A549 (cell line): ENCODE measurements at regions of chr13 and their contacts with region 1.

Region 1: DNA sequence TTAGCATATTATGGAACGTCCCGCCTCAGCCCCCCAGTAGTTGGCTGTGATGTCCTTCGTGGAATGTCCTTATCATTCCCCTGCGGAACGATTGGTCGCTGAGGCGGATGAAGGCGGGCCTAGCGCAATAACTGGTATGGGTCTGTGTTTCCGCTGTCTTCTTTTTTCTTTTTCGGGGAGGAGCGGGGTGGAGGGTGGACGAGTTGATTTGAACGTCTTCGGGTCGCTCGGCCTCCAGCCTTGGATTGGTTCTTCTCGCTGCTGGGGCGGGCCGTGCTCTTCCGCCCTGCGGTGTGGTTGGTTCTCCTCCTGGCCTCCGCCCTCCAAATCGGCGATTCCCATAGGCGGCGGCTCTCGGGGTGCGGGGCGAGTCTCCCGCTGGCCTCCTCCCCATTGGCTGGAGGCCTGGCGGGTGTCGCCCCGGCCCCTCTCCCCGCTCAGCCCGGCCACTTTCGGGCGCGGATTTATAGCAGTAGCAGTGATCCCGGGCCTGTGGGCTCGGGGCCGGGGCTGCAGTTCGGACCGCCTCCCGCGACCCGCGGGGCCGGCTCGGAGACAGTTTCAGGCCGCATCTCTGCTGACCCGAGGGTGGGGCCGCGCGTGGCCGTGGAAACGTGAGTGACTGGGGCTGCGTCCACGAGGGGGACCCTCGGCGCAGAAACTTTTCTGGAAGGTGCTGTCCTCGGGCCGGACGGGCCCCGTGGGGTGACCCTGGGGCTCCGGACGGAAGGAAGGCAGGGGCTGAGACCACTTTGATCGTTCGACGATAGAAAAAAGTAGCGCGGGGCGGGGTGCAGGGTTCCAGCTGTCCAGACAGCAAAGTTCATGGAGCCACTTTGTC is 2.1 kb downstream of the ING1 start:
- DNase-seq: peak; percentile 82 to 98
- ATAC-seq: peak; percentile 70 to 86
- H3K4me3 ChIP-seq: peak overlapping the region; percentile 93
- H3K27ac ChIP-seq: peak overlapping the region; percentile 73 to 87
- H3K4me1 ChIP-seq: peaks cover 18% of the 10 kb centered on the region; the same call in 2 of the 3 replicates
- CTCF ChIP-seq: no peak
- EP300 ChIP-seq: no peak
- POLR2A ChIP-seq: peak; percentile 74
- RAD21 ChIP-seq: no peak

Region 2: GRCh38 chr13:110726726-110727125 is 11.1 kb after region 1 on chr13:
- CTCF ChIA-PET with region 1: no interaction called
- POLR2A ChIA-PET with region 1: interaction called, 11 read pairs
- DNase-seq: no peak
- ATAC-seq: no peak
- H3K4me3 ChIP-seq: no peak overlapping the region
- H3K27ac ChIP-seq: no peak overlapping the region
- H3K4me1 ChIP-seq: no peaks in the 10 kb centered on the region
- CTCF ChIP-seq: no peak
- EP300 ChIP-seq: no peak
- POLR2A ChIP-seq: no peak
- RAD21 ChIP-seq: no peak

Region 3: DNA sequence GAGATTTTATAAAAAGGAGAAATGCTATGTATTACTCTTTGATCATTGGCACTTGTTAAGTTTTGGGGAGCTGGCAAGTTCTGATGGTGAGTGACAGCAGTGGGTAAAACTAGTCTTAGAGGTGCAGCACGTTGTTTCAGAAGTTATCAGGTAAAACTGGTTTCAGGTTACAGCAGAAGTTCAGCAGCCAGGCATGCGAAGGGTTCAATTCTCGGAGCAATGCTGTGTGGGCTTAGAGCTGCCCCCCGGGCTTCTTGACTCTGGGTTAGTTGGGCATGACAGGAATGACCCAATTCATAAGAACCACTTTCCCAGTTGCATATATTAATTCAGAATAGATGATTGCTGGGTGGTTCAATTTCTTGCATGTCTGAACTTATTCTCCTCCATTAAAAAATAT is 32.7 kb after region 1 on chr13:
- CTCF ChIA-PET with region 1: no interaction called
- POLR2A ChIA-PET with region 1: no interaction called
- DNase-seq: no peak
- ATAC-seq: no peak
- H3K4me3 ChIP-seq: no peak overlapping the region
- H3K27ac ChIP-seq: no peak overlapping the region
- H3K4me1 ChIP-seq: no peaks in the 10 kb centered on the region
- CTCF ChIP-seq: no peak
- EP300 ChIP-seq: no peak
- POLR2A ChIP-seq: no peak
- RAD21 ChIP-seq: no peak

Region 4: GRCh38 chr13:110869805-110870706 is 154.4 kb after region 1 on chr13:
- CTCF ChIA-PET with region 1: no interaction called
- POLR2A ChIA-PET with region 1: interaction called, 14 read pairs
- DNase-seq: peak; percentile 90 to 96
- ATAC-seq: peak; percentile 91
- H3K4me3 ChIP-seq: peak overlapping the region; percentile 32; the same call in 2 of the 3 replicates
- H3K27ac ChIP-seq: peak overlapping the region; percentile 52 to 81
- H3K4me1 ChIP-seq: peaks cover 19% of the 10 kb centered on the region
- CTCF ChIP-seq: no peak
- EP300 ChIP-seq: peak in 1 of 2 experiments; percentile 17; a peak in 1 of 5 replicates
- POLR2A ChIP-seq: no peak
- RAD21 ChIP-seq: no peak

Region 5: DNA sequence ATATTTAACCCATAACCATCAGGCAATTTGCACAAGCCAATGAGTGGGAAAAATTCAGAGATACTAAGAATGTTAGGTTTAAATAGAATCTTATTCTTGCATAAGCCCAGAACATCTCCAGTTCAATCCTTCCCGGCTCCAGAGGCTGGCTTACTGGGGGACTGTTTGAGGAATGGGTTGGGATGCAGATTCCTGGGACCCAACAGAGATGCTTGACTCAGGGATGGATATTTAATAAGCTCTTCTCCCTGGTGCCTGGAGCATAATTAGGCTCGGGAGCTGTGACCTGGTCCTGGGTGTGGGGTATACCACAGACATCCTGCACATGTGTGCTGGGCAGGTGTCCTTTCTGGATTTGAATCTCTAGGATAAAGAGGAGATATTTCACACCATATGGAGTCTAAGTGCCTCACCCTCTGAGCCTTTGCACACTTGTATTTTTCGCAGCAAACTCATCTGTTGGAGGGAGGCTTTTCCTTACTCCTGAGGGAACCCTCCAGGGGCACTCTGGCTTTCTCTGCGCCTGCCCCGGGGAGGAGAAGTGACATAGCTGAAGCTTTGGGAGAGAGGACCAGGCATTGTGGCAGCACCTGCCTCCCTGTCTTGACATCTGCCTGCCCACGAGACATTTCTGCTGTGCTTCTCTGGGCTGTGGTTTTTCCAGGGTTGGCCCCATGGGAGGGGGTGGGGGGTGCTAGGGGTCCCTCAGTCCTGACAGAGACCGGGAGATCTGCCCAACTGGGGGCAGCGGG is 235.4 kb after region 1 on chr13:
- CTCF ChIA-PET with region 1: no interaction called
- POLR2A ChIA-PET with region 1: no interaction called
- DNase-seq: no peak
- ATAC-seq: no peak
- H3K4me3 ChIP-seq: no peak overlapping the region
- H3K27ac ChIP-seq: no peak overlapping the region
- H3K4me1 ChIP-seq: peaks cover 12% of the 10 kb centered on the region; the same call in 2 of the 3 replicates
- CTCF ChIP-seq: no peak
- EP300 ChIP-seq: no peak
- POLR2A ChIP-seq: no peak
- RAD21 ChIP-seq: no peak